ENCODE measurements at regions of chr2 and their contacts with region 1.

Region 1: GRCh38 chr2:100835006-100835659 is 15.2 kb downstream of the NPAS2 start:
- DNase-seq: no peak
- H3K4me3 ChIP-seq: no peak overlapping the region
- H3K27ac ChIP-seq: no peak overlapping the region
- H3K4me1 ChIP-seq: no peaks in the 10 kb centered on the region
- H3K27me3 ChIP-seq: no peaks in the 10 kb centered on the region
- CTCF ChIP-seq: no peak
- POLR2A ChIP-seq: no peak

Region 2: GRCh38 chr2:100381240-100381639 is 453.9 kb before region 1 on chr2:
- intact Hi-C with region 1: no loop called
- DNase-seq: peak; percentile 63 to 81
- H3K4me3 ChIP-seq: no peak overlapping the region
- H3K27ac ChIP-seq: no peak overlapping the region
- H3K4me1 ChIP-seq: no peaks in the 10 kb centered on the region
- H3K27me3 ChIP-seq: no peaks in the 10 kb centered on the region
- CTCF ChIP-seq: peak; percentile 72 to 89 (median 87)
- POLR2A ChIP-seq: no peak

Region 3: DNA sequence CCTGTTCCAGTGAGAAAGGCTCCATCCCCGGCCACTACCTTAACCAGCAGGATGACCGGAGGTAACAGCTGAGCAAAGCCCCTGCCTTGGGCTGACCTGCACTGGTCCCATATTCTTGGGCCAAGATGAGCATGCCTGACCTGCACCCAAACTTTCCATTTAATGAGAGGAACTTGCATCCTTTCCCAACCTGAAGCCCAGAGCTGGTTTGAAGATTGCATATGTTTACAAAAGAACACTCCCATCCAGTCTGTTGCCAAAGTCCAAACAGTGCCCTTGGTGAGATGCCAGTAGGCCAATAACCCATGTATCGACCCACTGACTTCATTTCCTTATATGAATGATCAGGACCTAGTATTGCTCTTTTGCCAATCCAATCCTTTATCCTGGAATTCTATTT is 20.7 kb before region 1 on chr2:
- intact Hi-C with region 1: loop called (anchors 1 kb)
- DNase-seq: no peak
- H3K4me3 ChIP-seq: no peak overlapping the region
- H3K27ac ChIP-seq: no peak overlapping the region
- H3K4me1 ChIP-seq: no peaks in the 10 kb centered on the region
- H3K27me3 ChIP-seq: no peaks in the 10 kb centered on the region
- CTCF ChIP-seq: no peak
- POLR2A ChIP-seq: no peak

Measured in breast epithelium (tissue), 4 donors.